ENCODE measurements at regions of chr3 and their contacts with region 1.

Region 1: GRCh38 chr3:130800829-130801228 is 54.2 kb upstream of the PIK3R4 start:
- DNase-seq: no peak
- ATAC-seq: no peak
- H3K4me3 ChIP-seq: no peak overlapping the region
- H3K4me3 Mint-ChIP-seq: no peak overlapping the region
- H3K27ac ChIP-seq: no peak overlapping the region
- H3K27ac Mint-ChIP-seq: no peak overlapping the region
- H3K4me1 ChIP-seq: no peaks in the 10 kb centered on the region
- H3K4me1 Mint-ChIP-seq: no peaks in the 10 kb centered on the region
- H3K27me3 ChIP-seq: no peaks in the 10 kb centered on the region
- H3K27me3 Mint-ChIP-seq: peaks cover 4 to 17% of the 10 kb centered on the region in 2 donors

Region 2: DNA sequence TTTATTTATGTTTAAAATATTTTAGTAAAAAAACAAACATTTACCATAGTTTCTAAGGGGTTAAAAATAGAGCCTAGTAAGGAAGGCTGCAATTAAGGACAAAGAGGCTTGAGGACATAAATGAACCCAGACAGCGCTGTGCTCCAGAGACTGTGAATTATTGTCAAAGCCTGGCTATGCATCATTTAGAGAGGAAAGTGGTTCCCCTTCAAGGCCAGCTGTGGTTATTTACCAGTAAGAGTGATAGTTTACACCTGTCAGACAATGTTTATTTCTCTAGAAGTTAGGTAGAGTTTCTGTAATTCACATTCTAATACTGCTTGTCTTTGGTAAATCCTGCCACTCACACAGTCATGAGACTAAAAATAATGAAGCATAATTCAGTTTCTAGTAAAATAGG is 21.8 kb before region 1 on chr3:
- CTCF ChIA-PET with region 1: no interaction called
- POLR2A ChIA-PET with region 1: no interaction called
- DNase-seq: no peak
- ATAC-seq: no peak
- H3K4me3 ChIP-seq: no peak overlapping the region
- H3K4me3 Mint-ChIP-seq: no peak overlapping the region
- H3K27ac ChIP-seq: no peak overlapping the region
- H3K27ac Mint-ChIP-seq: no peak overlapping the region
- H3K4me1 ChIP-seq: no peaks in the 10 kb centered on the region
- H3K4me1 Mint-ChIP-seq: no peaks in the 10 kb centered on the region
- H3K27me3 ChIP-seq: no peaks in the 10 kb centered on the region
- H3K27me3 Mint-ChIP-seq: peaks cover 7% of the 10 kb centered on the region in 2 donors

Region 3: GRCh38 chr3:131381444-131382291 is 580.8 kb after region 1 on chr3 and contains the start of gene NUDT16:
- CTCF ChIA-PET with region 1: no interaction called
- POLR2A ChIA-PET with region 1: interaction called in 1 of 2 experiments, 18 read pairs
- DNase-seq: peak; percentile 84 to 97 (median 92)
- ATAC-seq: peak; percentile 96 to 99 (median 98)
- H3K4me3 ChIP-seq: peak within 1 kb of the TSS; percentile 91 to 92
- H3K4me3 Mint-ChIP-seq: peak within 1 kb of the TSS; percentile 95 to 96 (median 96)
- H3K27ac ChIP-seq: peak within 1 kb of the TSS; percentile 38
- H3K27ac Mint-ChIP-seq: peak within 1 kb of the TSS; percentile 91 to 95
- H3K4me1 ChIP-seq: peaks cover 0 to 24% of the 10 kb centered on the region in 2 experiments
- H3K4me1 Mint-ChIP-seq: peaks cover 28 to 56% (median 44%) of the 10 kb centered on the region in 3 donors
- H3K27me3 ChIP-seq: peaks cover 0 to 4% of the 10 kb centered on the region in 2 experiments
- H3K27me3 Mint-ChIP-seq: no peaks in the 10 kb centered on the region
- total RNA-seq, gene NUDT16: 6.7 to 13.5 (median 12.8) TPM